MCF 10A (cell line): ENCODE measurements at regions of chr3 and their contacts with region 1.

Region 1: DNA sequence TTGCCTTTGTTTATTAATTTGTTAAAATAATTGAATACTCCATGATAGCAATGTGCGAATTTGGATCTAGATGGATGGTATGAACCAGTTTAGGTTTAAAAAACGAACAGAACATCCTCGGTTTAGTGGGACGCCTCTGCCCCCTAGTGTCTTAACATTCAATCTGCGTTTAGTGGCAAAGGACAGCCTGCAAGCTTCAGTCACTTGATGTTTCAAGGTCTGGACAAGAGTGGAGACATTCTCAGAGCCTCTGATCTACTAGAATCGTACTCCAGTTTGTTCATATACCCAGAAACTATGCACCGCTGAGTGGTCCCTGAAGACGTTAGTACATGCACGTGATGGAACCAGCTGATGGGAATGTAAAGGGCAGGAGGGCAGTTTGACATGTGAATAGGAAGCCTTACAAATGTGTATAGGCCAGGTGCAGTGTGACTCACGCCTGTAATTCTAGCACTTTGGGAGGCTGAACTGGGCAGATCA is 17.8 kb upstream of the ATP13A4 start:
- DNase-seq: peak; percentile 80
- H3K4me3 Mint-ChIP-seq: no peak overlapping the region
- H3K27ac Mint-ChIP-seq: no peak overlapping the region
- H3K4me1 Mint-ChIP-seq: peaks cover 10% of the 10 kb centered on the region
- H3K27me3 Mint-ChIP-seq: peaks cover 13% of the 10 kb centered on the region
- CTCF ChIP-seq: peak; percentile 78

Region 2: DNA sequence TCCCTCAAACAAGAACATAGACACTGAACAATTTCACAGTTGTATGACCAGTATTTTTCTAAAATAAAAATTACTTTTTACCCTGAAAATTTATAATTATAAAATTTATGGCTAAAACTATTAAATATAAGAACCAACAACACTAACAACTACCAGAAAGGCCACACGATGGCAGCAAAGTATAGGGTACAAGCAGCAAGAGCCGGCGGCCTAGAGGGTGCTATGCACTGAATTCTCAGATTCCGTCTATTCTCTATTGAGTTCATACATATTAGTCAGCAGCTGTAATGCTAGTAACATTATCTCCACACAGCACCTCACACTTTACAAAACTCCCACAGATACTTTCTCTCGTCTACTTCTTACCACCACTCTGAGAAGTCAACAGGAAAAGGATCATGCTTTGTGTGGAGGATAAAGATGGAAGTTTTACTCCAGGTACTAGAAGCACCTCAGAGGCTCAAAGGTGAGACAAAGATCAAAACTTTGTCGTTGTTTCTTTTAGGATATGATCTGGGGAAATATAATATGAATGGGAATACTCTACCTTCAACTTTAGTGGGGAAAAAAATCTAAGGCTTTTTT is 1005.7 kb before region 1 on chr3:
- CTCF ChIA-PET with region 1: interaction called, 7 read pairs
- POLR2A ChIA-PET with region 1: no interaction called
- intact Hi-C with region 1: loop called (anchors 2 kb)
- DNase-seq: peak; percentile 74
- H3K4me3 Mint-ChIP-seq: no peak overlapping the region
- H3K27ac Mint-ChIP-seq: no peak overlapping the region
- H3K4me1 Mint-ChIP-seq: no peaks in the 10 kb centered on the region
- H3K27me3 Mint-ChIP-seq: peaks cover 37% of the 10 kb centered on the region
- CTCF ChIP-seq: peak; percentile 78

Region 3: DNA sequence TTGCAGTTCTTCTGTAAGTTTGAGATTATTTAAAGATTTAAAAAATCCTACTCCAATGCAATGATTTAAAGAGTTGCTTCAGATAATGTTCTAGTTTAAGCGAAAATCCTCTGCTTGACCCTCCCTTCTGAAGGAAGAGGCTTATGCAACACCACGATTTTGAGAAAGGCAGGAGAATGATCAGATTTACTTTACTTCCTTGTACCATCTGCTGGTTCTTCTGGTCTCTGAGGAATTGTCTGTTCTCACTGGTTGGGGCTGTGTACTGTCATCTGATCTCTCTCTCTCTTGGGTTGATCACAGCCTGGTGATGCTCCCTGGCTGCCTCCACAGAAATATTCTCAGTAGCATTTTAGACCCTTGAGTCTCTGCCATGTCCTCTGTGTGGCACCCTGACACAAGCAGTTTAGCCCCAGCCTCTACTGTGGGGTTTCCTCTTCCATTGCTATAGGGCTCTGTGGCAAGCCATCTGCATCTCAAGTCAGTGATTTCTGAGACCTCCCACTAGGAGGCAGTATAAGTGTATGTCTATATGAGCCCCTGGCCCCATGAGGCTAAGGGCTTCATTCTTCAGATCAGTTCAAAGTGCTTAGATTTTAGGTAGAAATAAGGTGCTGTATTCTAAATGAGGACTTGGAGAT is 382.2 kb before region 1 on chr3:
- CTCF ChIA-PET with region 1: interaction called, 3 read pairs
- POLR2A ChIA-PET with region 1: no interaction called
- intact Hi-C with region 1: loop called (anchors 2 kb)
- DNase-seq: peak; percentile 56
- H3K4me3 Mint-ChIP-seq: no peak overlapping the region
- H3K27ac Mint-ChIP-seq: no peak overlapping the region
- H3K4me1 Mint-ChIP-seq: no peaks in the 10 kb centered on the region
- H3K27me3 Mint-ChIP-seq: peaks cover 66% of the 10 kb centered on the region
- CTCF ChIP-seq: peak; percentile 32

Region 4: GRCh38 chr3:193465992-193466608 is 106.4 kb before region 1 on chr3:
- CTCF ChIA-PET with region 1: interaction called, 49 read pairs
- POLR2A ChIA-PET with region 1: no interaction called
- intact Hi-C with region 1: loop called (anchors 1 kb)
- DNase-seq: no peak
- H3K4me3 Mint-ChIP-seq: no peak overlapping the region
- H3K27ac Mint-ChIP-seq: no peak overlapping the region
- H3K4me1 Mint-ChIP-seq: no peaks in the 10 kb centered on the region
- H3K27me3 Mint-ChIP-seq: peaks cover 46% of the 10 kb centered on the region
- CTCF ChIP-seq: no peak

Region 5: DNA sequence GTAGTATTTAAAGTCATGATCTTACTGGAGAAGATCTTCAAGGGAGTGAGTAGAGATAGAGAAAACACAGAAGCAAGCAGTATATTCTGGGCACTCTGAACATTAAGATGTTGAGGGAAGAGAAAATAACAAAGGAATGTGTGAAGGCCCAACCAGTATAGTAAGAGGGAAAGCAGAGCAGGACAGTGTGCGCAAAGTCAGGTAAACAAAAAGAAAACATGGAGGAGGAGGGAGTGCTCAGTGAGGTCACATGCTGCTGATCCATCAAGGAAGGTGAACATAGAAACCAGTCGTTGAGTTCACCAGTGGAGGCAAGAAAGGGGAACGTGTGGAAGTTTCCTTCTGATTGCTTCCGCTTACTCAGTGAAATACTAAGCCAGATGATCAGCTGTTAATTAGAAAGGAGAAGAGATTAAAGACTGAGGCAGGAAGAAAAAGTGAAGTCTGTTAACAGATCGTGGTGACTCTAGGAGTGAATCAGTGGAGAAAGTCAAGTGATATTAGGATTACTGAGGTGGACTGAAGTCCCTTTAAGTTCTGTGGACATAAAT is 67.8 kb after region 1 on chr3:
- CTCF ChIA-PET with region 1: no interaction called
- POLR2A ChIA-PET with region 1: no interaction called
- intact Hi-C with region 1: no loop called
- DNase-seq: no peak
- H3K4me3 Mint-ChIP-seq: no peak overlapping the region
- H3K27ac Mint-ChIP-seq: no peak overlapping the region
- H3K4me1 Mint-ChIP-seq: no peaks in the 10 kb centered on the region
- H3K27me3 Mint-ChIP-seq: no peaks in the 10 kb centered on the region
- CTCF ChIP-seq: no peak